Activated T-helper 1 cell treated with anti-CD3 and anti-CD28 coated beads, Interleukin-12 subunit alpha, Interleukin-12 subunit beta, Interleukin-2, Interleukin-4 antibody, amounts not matched to agents 30 ng/mL and 10 ng/mL and 1 ng/mL, durations not matched to agents 14 hours and 24 hours and 36 hours (primary cell): ENCODE measurements at regions of chr1 and their contacts with region 1.

Region 1: DNA sequence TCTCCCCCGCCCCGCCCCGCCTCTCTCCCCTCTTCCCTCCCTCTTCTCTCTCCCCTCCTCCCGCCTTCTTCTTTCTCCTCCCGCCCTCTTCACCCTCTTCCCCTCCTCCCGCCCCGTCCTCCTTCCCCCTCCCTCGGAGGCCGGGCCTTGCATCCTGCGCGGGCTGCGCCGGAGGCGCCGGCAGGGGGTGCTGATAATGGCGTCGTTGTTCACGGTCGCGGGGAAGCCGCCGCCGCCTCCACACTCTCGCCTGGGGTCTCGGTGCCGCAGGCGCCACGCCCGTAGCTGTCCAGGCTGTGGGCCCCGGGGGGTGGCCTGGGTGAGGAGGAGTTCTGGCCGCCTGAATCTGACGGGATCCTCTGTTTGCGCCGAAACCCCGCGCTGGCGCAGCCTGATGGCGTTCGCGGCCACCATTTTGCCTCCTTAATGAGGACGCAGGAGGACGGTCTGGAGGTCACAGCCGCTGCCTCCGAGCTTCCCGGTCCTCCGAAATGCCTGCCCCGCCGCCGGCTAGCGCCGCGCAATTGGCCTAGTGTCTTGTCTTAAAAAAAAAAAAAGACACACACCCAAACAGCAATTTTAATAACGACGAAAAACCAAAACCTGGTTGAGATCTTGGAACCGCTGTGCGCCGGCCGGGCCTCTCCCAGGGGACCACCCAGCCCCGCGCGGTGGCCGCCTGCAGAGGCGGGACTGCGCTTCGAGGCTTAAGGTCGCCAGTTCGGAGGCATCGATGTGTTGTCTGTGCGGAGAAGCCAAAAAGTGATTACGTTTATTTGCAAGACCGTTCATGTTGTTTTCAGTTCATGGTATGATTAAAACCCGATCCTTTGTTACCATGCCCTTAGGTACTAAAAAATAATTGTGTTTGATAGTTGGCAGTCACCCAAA is 106.6 kb upstream of the HNRNPU start:
- DNase-seq: peak; percentile 82
- H3K4me3 Mint-ChIP-seq: peak overlapping the region; percentile 92
- H3K27ac Mint-ChIP-seq: peak overlapping the region; percentile 98
- H3K4me1 Mint-ChIP-seq: peaks cover 21% of the 10 kb centered on the region
- H3K27me3 Mint-ChIP-seq: peaks cover 2% of the 10 kb centered on the region

Region 2: DNA sequence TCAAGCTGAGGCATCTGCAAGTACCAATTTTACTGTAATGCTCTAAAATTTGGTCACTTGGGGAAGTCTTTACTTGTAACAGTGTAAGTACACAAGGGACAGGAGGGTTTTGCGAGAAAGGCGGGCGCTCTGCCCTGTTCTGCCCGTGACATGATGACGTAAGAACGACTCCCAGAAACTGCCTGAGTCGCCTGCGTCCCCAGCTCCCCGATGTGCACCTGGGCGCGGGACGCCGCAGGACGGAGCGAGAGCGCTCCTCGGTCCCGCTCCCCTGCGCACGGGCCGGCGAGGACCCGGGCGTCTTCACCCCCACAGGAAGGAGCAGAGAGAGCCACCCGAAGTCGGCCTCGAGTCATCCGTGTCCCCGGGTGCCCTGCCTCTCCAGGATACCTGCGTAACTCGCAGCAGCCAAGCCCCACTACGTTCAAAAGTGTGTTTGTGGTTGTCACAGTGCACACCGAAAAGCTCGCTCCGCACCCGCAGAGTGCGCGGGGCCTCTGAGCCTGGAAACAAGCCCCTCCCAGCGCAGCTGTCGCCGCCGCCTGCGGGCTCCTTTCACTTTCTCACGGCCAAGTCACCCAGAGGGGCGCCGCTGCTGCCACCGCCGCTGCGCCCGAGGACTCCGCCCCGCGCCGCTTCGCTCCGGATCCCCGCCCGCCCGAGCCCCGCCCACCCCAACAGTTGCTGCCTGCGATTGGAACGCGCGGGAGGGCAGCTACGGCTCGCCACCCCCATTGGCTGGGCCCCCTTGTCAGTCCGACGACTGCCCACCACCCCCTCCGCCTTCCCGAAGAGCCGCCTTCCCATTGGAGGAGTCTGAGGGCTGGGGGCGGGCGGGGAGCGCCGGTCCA is 923.1 kb before region 1 on chr1:
- intact Hi-C with region 1: loop called (anchors 1 kb)
- DNase-seq: peak; percentile 93
- H3K4me3 Mint-ChIP-seq: peak overlapping the region; percentile 92
- H3K27ac Mint-ChIP-seq: peak overlapping the region; percentile 91
- H3K4me1 Mint-ChIP-seq: peaks cover 36% of the 10 kb centered on the region
- H3K27me3 Mint-ChIP-seq: peaks cover 30% of the 10 kb centered on the region

Region 3: GRCh38 chr1:244599937-244600350 is 371.0 kb before region 1 on chr1:
- intact Hi-C with region 1: loop called (anchors 2 kb)
- DNase-seq: peak; percentile 54
- H3K4me3 Mint-ChIP-seq: peak overlapping the region; percentile 79
- H3K27ac Mint-ChIP-seq: peak overlapping the region; percentile 94
- H3K4me1 Mint-ChIP-seq: peaks cover 22% of the 10 kb centered on the region
- H3K27me3 Mint-ChIP-seq: peaks cover 9% of the 10 kb centered on the region

Region 4: GRCh38 chr1:244835276-244836134 is 135.4 kb before region 1 on chr1 and contains the start of gene COX20:
- intact Hi-C with region 1: loop called (anchors 1 kb)
- DNase-seq: peak; percentile 85
- H3K4me3 Mint-ChIP-seq: peak within 1 kb of the TSS; percentile 96
- H3K27ac Mint-ChIP-seq: peak within 1 kb of the TSS; percentile 99
- H3K4me1 Mint-ChIP-seq: peaks cover 56% of the 10 kb centered on the region
- H3K27me3 Mint-ChIP-seq: no peaks in the 10 kb centered on the region
- total RNA-seq, gene COX20: 27.4 and 27.6 TPM in 2 replicates

Region 5: DNA sequence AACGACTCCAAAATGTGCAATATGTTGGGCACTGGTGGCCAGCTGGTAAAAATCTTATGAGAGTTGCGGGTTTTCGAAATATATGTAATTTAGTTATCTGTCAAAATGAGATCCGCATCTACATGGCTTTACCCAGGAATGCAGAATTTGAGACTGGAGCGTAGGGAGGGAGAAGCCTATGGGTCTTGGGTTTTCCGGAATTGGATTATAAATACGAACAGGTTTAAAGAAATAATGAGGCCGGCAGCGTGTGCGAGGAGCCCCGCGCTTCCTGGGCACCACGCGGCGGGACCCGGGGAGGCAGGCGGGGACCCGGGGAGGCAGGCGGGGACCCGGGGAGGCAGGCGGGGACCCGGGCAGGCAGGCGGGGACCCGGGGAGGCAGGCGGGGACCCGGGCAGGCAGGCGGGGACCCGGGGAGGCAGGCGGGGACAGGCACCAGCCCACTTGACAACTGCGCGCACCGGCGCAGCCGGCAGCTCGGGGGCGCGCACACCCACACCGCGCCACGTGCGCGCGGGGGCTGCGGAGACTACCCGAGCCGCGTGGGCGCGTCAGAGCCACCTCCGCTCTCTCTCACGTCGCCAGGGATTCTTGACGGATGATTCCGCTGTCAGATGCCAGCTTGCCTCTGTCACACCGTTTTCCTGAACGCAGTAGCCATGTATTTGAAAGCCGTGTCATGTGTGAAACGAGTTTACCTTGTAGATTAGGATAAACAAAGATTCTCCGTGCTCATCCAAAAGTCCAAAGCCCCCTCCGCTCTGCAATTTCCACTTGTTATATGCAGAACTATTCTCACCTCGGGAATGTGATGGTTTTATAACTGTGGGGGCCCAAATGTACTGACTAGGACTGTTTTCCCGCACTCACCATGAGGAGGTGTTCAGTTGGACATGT is 52.2 kb before region 1 on chr1:
- intact Hi-C with region 1: loop called (anchors 1 kb)
- DNase-seq: peak; percentile 39
- H3K4me3 Mint-ChIP-seq: peak overlapping the region; percentile 82
- H3K27ac Mint-ChIP-seq: peak overlapping the region; percentile 55
- H3K4me1 Mint-ChIP-seq: peaks cover 14% of the 10 kb centered on the region
- H3K27me3 Mint-ChIP-seq: peaks cover 30% of the 10 kb centered on the region

Region 6: DNA sequence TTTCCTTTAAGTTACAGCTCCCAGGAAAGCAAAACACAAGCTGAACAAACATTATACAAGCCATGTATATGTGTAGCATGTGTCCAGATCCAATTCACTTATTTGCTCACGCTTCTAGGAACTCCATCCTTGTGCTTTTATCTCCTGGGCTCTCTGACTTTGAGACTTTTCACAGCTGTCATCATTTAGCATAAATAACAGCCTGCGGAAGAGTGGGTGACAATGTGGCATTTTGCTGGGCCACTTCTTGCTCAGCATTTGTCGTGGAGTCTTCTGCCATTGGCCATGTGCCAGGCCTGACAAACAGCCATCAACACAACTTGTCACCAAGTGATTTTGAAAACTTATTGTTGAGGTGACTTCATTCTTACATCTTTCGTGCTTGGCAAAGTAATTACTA is 348.2 kb after region 1 on chr1:
- intact Hi-C with region 1: no loop called
- DNase-seq: no peak
- H3K4me3 Mint-ChIP-seq: no peak overlapping the region
- H3K27ac Mint-ChIP-seq: no peak overlapping the region
- H3K4me1 Mint-ChIP-seq: no peaks in the 10 kb centered on the region
- H3K27me3 Mint-ChIP-seq: peaks cover 2% of the 10 kb centered on the region

Region 7: DNA sequence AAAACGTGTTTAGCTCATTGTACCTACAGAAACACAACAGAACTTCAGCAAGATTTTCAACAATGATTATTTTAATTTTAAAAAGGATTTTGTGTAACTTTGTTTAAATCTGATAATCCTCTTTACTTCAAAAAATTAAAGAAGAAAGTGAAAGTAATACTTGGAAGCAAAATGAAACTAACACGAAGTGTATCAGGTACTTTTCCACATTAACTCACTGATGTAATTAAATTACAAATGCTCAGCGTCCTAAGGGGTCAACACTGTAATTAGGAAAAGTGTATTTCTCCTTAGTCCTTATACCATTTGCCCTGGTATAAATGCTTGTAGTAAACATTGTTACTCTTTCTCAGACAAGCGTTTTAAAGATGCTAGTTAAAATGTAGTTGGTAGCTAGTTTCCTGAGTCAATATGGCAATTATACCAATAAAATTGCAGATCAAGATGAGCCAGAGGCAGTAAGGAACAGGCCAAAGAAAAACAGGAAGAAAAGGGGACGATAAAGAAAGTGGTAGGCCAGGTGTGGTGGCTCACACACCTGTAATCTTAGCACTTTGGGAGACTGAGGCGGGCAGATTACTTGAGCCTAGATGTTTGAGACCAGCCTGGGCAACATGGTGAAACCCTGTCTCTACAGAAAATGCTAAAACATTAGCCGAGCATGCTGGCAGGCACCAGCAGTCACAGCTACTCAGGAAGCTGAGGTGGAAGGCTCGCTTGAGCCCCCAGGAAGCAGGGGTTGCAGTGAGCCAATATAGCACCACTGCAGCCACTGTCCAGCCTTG is 983.2 kb after region 1 on chr1:
- intact Hi-C with region 1: loop called (anchors 10 kb)
- DNase-seq: no peak
- H3K4me3 Mint-ChIP-seq: peak overlapping the region; percentile 75
- H3K27ac Mint-ChIP-seq: peak overlapping the region; percentile 88
- H3K4me1 Mint-ChIP-seq: peaks cover 26% of the 10 kb centered on the region
- H3K27me3 Mint-ChIP-seq: no peaks in the 10 kb centered on the region